Activated B cell treated with CpG ODN at 0.5 μM for 24 hours (primary cell): ENCODE measurements at regions of chr6 and their contacts with region 1.

Region 1: DNA sequence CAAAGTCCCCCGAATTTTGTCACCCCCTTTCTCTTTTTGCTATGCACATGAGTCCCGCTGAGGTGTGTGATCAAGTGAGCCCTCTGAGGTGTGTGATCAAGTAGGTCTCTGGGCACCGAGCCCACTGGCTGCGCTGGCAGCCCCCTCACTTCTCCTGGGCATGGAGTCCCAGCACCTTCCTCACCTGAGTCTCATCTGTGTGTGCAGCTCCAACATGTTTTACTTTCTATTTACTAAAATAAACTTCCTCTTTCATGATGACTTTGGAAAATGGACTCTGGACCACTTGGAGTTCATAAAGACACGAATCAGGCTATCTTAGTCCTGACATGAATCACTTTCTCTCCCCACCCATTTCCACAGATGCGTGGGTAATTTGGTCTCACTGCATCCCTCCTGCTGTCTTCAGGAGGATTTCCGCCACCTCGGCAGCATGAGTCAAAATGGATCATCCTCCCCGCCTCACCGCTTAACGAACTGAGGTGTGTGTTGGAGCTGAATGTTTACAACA is 39.8 kb downstream of the PRDM1 start:
- DNase-seq: no peak
- ATAC-seq: peak; percentile 47
- H3K4me3 Mint-ChIP-seq: peak overlapping the region; percentile 69
- H3K27ac Mint-ChIP-seq: peak overlapping the region; percentile 53
- H3K4me1 Mint-ChIP-seq: peaks cover 30% of the 10 kb centered on the region
- H3K27me3 Mint-ChIP-seq: no peaks in the 10 kb centered on the region
- CTCF ChIP-seq: no peak

Region 2: DNA sequence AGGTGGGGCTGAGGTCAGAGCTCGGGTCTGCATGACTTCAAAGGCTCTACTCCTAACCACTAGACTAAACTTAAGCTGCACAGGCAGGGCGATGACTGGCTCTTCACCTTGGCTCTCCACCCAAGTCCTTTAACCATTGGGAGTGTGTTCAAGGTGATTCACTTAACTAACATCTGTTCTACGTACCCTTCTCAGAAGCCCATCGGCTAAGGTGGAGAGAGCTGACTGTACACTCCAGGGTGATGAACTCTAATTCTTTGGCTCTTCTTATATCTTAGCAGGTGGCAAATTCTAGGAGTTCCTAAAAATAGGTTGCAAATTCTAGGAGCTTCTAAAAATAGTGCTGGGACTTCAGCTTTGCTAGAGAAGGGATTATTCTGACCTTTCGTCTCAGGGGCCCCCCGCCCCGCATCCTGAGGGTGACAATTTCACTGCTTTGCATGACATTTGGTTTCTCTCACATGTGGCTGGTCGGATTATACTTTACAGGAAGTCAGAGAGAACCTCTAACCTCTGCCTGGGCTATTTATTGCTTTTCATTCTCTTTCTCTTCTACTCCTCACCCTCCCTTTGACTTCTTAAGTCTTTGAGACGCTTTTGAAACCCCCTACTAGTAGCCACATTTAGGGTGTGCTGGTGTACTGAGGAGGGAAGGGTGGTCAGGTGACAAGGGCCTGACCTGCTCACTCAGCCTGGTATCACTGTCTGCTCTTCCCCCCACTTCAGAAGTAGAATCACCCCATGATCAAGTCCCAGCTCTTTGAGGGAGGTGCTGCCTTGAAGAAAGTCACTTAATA is 15.7 kb after region 1 on chr6:
- CTCF ChIA-PET with region 1: no interaction called
- POLR2A ChIA-PET with region 1: interaction called, 6 read pairs
- intact Hi-C with region 1: loop called (anchors 2 kb)
- DNase-seq: no peak
- ATAC-seq: peak; percentile 72
- H3K4me3 Mint-ChIP-seq: peak overlapping the region; percentile 69
- H3K27ac Mint-ChIP-seq: peak overlapping the region; percentile 88
- H3K4me1 Mint-ChIP-seq: peaks cover 43% of the 10 kb centered on the region
- H3K27me3 Mint-ChIP-seq: no peaks in the 10 kb centered on the region
- CTCF ChIP-seq: no peak

Region 3: DNA sequence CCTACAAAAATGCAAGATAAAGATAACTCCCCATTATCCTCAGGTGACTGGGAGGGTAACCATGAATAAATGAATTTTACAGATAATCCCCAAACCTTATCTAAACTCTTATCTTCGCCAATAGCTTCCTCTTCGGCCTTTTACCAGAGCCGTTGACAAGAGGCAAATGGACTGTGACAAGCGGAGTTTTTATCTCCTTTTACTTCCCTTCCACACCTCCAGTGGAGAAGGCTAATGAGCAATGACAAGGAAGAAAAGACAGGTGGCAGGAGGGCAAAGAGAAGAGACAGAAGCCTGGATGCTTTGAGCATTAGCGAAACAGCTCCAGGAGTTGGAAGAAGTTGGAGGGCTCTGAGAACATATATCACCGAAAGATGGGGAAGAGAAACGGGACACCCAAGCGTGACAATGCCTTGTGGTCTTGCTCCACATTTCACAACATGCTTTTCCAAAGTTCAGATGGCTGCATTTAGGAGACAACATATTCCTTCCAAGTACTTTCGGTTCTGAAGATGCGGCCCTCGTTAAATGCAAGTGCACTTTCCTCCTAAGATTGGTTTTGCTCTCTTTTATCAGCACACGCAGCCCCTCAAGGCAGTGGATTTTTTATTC is 29.3 kb after region 1 on chr6:
- CTCF ChIA-PET with region 1: no interaction called
- POLR2A ChIA-PET with region 1: no interaction called
- intact Hi-C with region 1: no loop called
- DNase-seq: no peak
- ATAC-seq: no peak
- H3K4me3 Mint-ChIP-seq: no peak overlapping the region
- H3K27ac Mint-ChIP-seq: no peak overlapping the region
- H3K4me1 Mint-ChIP-seq: peaks cover 11% of the 10 kb centered on the region
- H3K27me3 Mint-ChIP-seq: no peaks in the 10 kb centered on the region
- CTCF ChIP-seq: no peak

Region 4: DNA sequence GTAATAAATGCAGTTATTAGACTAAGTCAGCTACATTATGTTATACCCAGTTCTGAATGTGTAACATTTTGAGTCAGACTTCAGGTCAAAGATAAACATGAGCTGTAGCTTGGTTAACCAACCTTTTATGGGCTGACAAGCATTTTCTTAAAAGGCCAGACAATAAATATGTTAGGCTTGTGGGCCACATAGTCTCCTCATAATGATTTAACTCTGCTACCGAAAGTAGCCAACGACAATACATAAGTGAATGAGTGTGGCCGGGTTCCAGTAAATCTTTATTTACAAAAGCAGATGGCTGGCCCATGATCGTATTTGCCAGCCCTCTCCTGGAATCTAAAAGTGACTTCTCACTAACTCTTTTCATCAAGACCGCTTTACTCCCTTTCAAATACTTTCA is 149.7 kb after region 1 on chr6:
- CTCF ChIA-PET with region 1: no interaction called
- POLR2A ChIA-PET with region 1: no interaction called
- intact Hi-C with region 1: no loop called
- DNase-seq: no peak
- ATAC-seq: no peak
- H3K4me3 Mint-ChIP-seq: no peak overlapping the region
- H3K27ac Mint-ChIP-seq: no peak overlapping the region
- H3K4me1 Mint-ChIP-seq: peaks cover 9% of the 10 kb centered on the region
- H3K27me3 Mint-ChIP-seq: no peaks in the 10 kb centered on the region
- CTCF ChIP-seq: no peak